ENCODE measurements at regions of chr5 and their contacts with region 1.

Region 1: DNA sequence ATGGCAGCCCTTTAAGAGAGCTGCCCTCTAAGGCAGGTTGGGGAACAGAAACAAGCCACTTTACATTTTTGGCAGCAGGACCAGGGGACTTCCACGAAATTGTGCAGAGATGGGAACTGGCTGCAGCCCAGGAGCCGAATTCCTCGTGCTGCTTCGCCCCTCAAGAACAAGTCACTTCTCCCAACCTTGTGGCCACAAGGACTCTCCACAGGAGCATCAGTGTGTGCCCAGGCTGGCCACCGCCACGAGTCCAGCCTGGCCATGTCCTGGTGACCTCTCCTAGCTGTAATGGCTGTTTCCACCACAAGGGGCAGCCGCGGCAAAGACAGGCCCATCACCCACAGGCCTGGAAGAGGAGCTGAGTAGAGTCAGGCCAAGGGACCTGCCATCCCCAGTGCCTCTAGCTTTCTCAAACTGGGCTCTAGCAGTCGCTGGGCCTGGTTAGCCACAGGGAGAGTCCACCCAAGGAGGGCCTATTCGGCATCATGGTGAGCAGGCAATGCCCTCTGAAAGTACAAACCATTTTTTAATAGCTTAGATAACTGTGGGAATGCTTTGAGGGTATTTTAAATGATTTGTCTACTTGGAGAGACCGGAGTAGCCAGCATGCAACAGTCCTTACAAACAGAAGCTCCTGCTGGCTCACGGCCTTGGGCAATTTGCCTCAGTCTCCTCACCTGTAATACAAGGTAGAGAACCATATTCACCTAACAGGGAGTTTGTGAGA is 129.0 kb downstream of the COL23A1 start:
- DNase-seq: peak; percentile 81
- H3K4me3 ChIP-seq: no peak overlapping the region
- H3K27ac ChIP-seq: peak overlapping the region in 1 of 2 experiments; percentile 82; a peak in 2 of 4 replicates
- H3K4me1 ChIP-seq: peaks cover 0 to 32% of the 10 kb centered on the region in 2 experiments; a peak in 1 of 4 replicates
- H3K27me3 ChIP-seq: no peaks in the 10 kb centered on the region
- CTCF ChIP-seq: peak; percentile 35; the same call in 1 of the 2 replicates
- EP300 ChIP-seq: no peak
- RAD21 ChIP-seq: peak; percentile 70

Region 2: DNA sequence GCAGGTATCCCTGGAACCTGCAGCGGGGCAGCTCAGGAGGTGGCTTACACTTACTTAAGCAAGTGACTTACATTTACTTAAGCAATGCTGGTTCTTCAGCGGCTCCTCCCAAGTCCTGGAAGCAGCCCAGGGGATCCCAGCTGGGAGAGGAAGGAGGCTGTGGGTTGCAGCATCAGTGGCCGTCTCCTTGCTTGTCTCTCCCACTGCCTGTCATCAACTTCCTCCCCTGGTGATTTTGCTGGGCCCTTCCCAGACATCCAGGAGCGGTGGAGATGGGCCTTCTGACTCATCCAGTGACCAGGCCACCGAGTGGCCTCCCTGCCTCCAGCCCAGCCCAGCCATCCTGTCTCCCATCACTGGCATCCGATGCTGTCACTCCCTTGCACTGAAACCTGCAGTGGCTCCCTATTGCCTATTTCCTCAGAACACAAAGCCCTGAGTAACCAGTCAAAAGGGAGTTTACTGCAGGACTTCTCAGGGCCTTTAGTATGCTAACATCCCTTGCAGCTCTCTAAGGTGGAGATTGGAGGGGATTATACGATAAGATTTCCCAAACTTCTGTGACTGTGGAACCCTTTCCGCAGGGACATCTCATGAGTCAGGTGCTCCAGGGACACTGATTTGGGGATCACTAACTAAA is 72.7 kb before region 1 on chr5:
- CTCF ChIA-PET with region 1: interaction called, 10 read pairs
- POLR2A ChIA-PET with region 1: no interaction called
- DNase-seq: peak; percentile 20
- H3K4me3 ChIP-seq: no peak overlapping the region
- H3K27ac ChIP-seq: peak overlapping the region in 1 of 2 experiments; percentile 96; a peak in 2 of 4 replicates
- H3K4me1 ChIP-seq: peaks cover 0 to 82% of the 10 kb centered on the region in 2 experiments; a peak in 1 of 4 replicates
- H3K27me3 ChIP-seq: no peaks in the 10 kb centered on the region
- CTCF ChIP-seq: no peak
- EP300 ChIP-seq: no peak
- RAD21 ChIP-seq: no peak

Region 3: DNA sequence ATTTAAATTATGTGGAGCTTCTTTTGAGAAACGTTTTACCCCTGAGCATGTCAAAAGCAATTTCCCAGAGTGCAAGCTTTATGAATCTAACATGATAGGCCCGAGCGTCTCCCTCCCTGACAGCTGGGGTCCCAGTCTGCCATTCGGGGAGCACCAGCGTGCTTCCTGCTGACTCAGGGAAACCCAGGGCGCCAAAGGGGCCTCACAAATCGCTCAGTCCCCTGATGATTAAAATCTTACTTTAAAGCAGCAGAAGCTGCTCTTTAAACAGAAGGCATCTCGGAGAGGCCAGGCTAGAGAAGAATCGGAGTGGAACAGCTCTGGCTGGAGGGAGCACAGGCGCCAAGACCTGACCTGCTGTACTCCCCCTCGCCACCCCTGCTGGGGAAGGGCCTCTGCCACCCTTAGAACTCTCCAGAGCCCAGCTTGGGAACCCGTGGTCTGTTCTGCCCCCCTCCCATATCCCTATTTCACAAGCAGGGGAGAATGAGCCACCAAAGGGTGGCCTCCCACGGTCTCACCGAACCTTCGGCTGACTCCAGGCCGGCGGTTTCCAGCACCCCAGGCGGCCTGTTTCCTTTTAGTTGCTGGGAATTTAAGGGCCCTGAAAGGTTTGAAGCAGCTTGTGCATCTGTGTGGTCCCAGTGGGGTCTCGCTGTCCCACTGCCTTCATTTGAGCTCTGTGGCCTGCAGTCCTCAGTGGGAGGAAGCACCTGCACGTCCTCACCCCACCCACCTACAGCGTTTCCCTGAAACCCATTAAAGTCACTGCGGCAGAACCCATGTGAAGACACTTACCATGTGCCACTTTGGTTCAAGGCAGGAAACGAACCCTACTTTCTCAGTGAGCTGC is 18.5 kb before region 1 on chr5:
- CTCF ChIA-PET with region 1: interaction called, 11 read pairs
- POLR2A ChIA-PET with region 1: no interaction called
- DNase-seq: no peak
- H3K4me3 ChIP-seq: no peak overlapping the region
- H3K27ac ChIP-seq: no peak overlapping the region; a peak in 1 of 4 replicates
- H3K4me1 ChIP-seq: peaks cover 0 to 25% of the 10 kb centered on the region in 2 experiments; a peak in 1 of 4 replicates
- H3K27me3 ChIP-seq: no peaks in the 10 kb centered on the region
- CTCF ChIP-seq: no peak
- EP300 ChIP-seq: no peak
- RAD21 ChIP-seq: no peak

Region 4: GRCh38 chr5:178473854-178474253 is 12.7 kb after region 1 on chr5:
- CTCF ChIA-PET with region 1: interaction called, 23 read pairs
- POLR2A ChIA-PET with region 1: no interaction called
- DNase-seq: no peak
- H3K4me3 ChIP-seq: no peak overlapping the region
- H3K27ac ChIP-seq: no peak overlapping the region
- H3K4me1 ChIP-seq: peaks cover 0 to 44% of the 10 kb centered on the region in 2 experiments; a peak in 1 of 4 replicates
- H3K27me3 ChIP-seq: no peaks in the 10 kb centered on the region
- CTCF ChIP-seq: no peak
- EP300 ChIP-seq: no peak
- RAD21 ChIP-seq: no peak

Region 5: GRCh38 chr5:178542455-178542854 is 81.3 kb after region 1 on chr5:
- CTCF ChIA-PET with region 1: interaction called, 12 read pairs
- POLR2A ChIA-PET with region 1: no interaction called
- DNase-seq: no peak
- H3K4me3 ChIP-seq: no peak overlapping the region
- H3K27ac ChIP-seq: peak overlapping the region in 1 of 2 experiments; percentile 29; a peak in 1 of 4 replicates
- H3K4me1 ChIP-seq: peaks cover 0 to 26% of the 10 kb centered on the region in 2 experiments; a peak in 1 of 4 replicates
- H3K27me3 ChIP-seq: no peaks in the 10 kb centered on the region
- CTCF ChIP-seq: no peak
- EP300 ChIP-seq: no peak
- RAD21 ChIP-seq: no peak

Region 6: GRCh38 chr5:178551059-178551458 is 89.9 kb after region 1 on chr5:
- CTCF ChIA-PET with region 1: interaction called, 24 read pairs
- POLR2A ChIA-PET with region 1: no interaction called
- DNase-seq: peak; percentile 54
- H3K4me3 ChIP-seq: no peak overlapping the region
- H3K27ac ChIP-seq: no peak overlapping the region; a peak in 1 of 4 replicates
- H3K4me1 ChIP-seq: peaks cover 0 to 29% of the 10 kb centered on the region in 2 experiments; a peak in 2 of 4 replicates
- H3K27me3 ChIP-seq: no peaks in the 10 kb centered on the region
- CTCF ChIP-seq: peak; percentile 45
- EP300 ChIP-seq: no peak
- RAD21 ChIP-seq: peak; percentile 66